ENCODE measurements at regions of chr2 and their contacts with region 1.

Region 1: GRCh38 chr2:130824492-130825061 is 12.1 kb upstream of the ARHGEF4 start:
- DNase-seq: peak; percentile 98
- H3K4me3 Mint-ChIP-seq: peak overlapping the region; percentile 31
- H3K27ac Mint-ChIP-seq: peak overlapping the region; percentile 96
- H3K4me1 Mint-ChIP-seq: peaks cover 60% of the 10 kb centered on the region
- H3K27me3 Mint-ChIP-seq: no peaks in the 10 kb centered on the region
- CTCF ChIP-seq: no peak

Region 2: DNA sequence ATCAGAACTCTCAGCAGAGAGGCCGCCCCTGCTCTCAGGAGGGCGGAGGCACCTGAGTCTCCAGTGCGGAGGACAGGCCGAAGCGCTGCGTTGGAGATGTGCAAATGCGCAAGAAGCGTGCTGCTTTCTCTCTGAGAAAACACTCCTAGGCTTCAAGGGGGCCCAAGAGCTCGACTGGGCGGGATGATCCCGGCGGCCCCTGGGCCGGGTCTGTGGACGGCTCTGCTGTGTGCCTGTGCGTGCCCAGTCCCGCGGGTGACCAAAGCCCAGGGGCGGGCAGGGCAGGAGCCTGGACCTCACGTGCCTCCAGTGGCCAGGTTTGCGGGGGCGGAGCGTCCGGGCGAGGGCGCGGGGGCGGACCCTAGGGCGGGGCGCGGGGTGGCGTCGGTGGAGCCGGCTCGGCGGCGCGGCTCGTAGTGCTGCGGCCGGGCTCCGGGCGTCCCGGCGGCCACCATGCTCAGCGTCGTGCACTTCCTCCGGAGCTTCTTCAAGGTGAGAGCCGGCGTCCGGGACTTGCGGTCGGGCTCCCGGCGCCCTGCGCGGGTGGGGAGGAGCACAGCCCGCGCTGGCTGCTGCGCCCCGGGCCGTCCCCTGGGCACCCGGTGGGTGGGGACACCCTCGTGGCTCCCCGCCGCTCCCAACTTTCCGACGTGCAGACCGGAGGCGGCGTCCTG is 12.1 kb after region 1 on chr2 and contains the start of gene ARHGEF4:
- CTCF ChIA-PET with region 1: interaction called, 5 read pairs
- POLR2A ChIA-PET with region 1: interaction called, 24 read pairs
- intact Hi-C with region 1: no loop called
- DNase-seq: peak; percentile 68
- H3K4me3 Mint-ChIP-seq: peak within 1 kb of the TSS; percentile 71
- H3K27ac Mint-ChIP-seq: no peak within 1 kb of the TSS
- H3K4me1 Mint-ChIP-seq: peaks cover 26% of the 10 kb centered on the region
- H3K27me3 Mint-ChIP-seq: no peaks in the 10 kb centered on the region
- CTCF ChIP-seq: no peak
- total RNA-seq, gene ARHGEF4: 52.0 and 59.3 TPM in 2 replicates

Region 3: DNA sequence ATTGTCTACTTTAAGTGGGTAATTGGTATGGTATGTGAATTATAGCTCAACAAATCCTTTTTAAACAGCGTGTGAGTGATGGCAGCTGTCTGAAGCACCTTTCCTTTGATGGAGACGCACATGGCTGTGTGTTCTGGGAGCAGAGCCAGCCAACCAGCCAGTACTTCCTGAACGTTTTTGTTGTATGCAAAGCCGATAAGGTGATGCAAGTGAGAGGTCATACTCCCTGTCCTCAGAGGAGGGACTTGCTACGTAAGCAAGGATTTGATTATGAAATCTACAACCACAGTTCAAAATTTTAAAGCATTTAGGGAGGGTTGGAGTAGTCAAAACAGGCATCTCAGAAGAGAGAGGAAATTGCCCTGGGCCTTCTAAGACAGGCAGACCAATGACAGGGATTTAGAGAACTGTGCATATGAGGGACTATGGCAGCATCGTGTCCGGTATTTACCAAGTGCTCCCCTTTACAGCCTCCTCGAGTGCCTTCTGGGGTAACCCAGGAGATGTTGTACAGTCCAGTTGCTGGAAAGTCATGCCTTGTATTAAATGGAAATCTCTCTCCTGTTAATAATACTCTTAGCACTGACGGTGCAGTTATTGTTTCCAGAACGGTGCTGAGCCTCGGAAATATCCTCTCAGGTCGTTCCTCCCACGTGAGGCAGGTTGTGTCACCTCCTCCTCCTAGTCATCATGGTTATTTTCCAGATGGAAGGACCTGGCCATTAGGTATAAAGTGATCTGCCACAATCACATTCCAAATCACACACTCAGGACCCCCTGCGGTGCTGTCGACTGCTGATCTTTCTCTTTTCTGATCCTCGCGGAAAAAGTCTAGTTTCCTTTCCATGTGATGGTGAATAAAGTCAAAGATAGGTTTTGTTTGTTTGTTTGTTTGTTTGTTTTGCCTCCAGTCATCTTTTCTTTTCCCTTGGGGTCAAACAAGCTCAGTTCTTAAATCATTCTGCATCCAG is 40.5 kb after region 1 on chr2:
- CTCF ChIA-PET with region 1: interaction called, 8 read pairs
- POLR2A ChIA-PET with region 1: interaction called, 29 read pairs
- intact Hi-C with region 1: loop called (anchors 5 kb)
- DNase-seq: peak; percentile 99
- H3K4me3 Mint-ChIP-seq: peak overlapping the region; percentile 8
- H3K27ac Mint-ChIP-seq: peak overlapping the region; percentile 89
- H3K4me1 Mint-ChIP-seq: peaks cover 37% of the 10 kb centered on the region
- H3K27me3 Mint-ChIP-seq: no peaks in the 10 kb centered on the region
- CTCF ChIP-seq: no peak